Vagina (tissue), 2 donors: ENCODE measurements at regions of chr7 and their contacts with region 1.

Region 1: GRCh38 chr7:91320366-91321078 is 56.3 kb downstream of the FZD1 start:
- DNase-seq: no peak
- H3K4me3 ChIP-seq: no peak overlapping the region
- H3K27ac ChIP-seq: no peak overlapping the region
- H3K4me1 ChIP-seq: no peaks in the 10 kb centered on the region
- H3K27me3 ChIP-seq: no peaks in the 10 kb centered on the region
- CTCF ChIP-seq: no peak
- POLR2A ChIP-seq: no peak

Region 2: DNA sequence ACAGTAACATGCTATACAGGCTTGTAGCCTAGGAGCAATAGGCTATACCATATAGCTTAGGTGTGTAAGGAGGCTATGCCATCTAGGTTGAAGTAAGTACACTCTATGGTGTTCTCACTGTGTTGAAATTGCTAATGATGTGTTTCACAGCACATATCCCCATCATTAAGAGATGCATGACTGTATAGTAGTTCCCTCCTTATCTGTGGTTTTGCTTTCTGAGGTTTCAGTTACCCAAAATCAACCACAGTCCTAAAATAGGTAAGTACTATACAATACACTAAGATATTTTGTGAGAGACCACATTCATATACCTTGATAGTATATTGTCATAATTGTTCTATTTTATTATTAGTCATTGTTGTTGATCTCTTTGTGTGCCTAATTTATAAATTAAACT is 43.6 kb before region 1 on chr7:
- intact Hi-C with region 1: loop called (anchors 1 kb)
- DNase-seq: no peak
- H3K4me3 ChIP-seq: no peak overlapping the region
- H3K27ac ChIP-seq: no peak overlapping the region
- H3K4me1 ChIP-seq: no peaks in the 10 kb centered on the region
- H3K27me3 ChIP-seq: no peaks in the 10 kb centered on the region
- CTCF ChIP-seq: no peak
- POLR2A ChIP-seq: no peak